Heart right ventricle (tissue), 16 donors: ENCODE measurements at regions of chr7 and their contacts with region 1.

Region 1: DNA sequence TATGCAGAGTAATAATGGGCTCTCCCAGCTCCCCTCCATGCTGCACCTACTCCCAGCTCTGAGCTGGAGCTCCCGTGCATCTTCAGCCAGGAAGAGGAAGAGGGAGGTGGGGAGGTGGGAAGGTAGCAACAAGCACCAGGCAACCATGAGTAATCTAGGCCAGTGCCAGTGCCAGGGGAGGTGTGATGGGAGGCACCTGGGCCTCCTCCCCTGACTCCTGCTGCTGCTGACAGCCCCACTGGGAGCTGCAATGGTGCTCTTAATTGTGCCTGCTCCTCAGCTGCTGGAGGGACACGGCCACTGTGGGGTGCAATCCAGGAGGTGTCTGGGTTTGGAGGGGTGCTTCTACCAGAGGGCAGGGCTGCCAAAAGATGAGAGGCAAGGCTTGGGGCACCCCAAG is 243.0 kb downstream of the PLXNA4 start:
- DNase-seq: no peak
- ATAC-seq: peak in 7 of 8 donors; percentile 13 to 73 (median 34)
- H3K4me3 ChIP-seq: no peak overlapping the region
- H3K27ac ChIP-seq: no peak overlapping the region
- H3K4me1 ChIP-seq: peaks cover 0 to 23% (median 8%) of the 10 kb centered on the region in 9 donors
- H3K27me3 ChIP-seq: peaks cover 0 to 3% (median 0%) of the 10 kb centered on the region in 7 donors
- CTCF ChIP-seq: no peak

Region 2: DNA sequence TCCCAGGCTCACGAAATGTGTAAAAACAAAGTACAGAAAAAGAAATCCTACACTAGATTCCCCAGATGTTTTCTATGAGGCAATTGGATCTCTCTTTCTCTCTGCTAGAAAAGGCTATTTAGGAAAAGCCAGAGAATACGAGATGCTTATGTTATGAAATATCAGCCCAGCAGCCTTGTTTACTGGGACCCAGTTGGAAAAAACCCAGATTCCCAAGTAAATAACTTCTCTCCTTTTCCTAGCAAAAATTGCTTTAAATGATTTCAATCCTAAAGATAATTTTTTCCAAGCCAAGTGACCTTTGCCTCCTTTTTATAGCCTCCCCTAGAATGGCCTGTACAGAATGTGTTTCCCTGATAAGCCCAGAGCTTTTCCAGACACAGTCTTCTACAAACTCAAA is 43.7 kb after region 1 on chr7:
- intact Hi-C with region 1: loop called in 2 of 10 experiments (anchors 5 kb)
- DNase-seq: no peak
- ATAC-seq: peak in 2 of 8 donors; percentile 45 to 50
- H3K4me3 ChIP-seq: no peak overlapping the region
- H3K27ac ChIP-seq: peak overlapping the region in 7 of 10 donors; percentile 36 to 55 (median 39)
- H3K4me1 ChIP-seq: peaks cover 10 to 62% (median 44%) of the 10 kb centered on the region in 9 donors
- H3K27me3 ChIP-seq: no peaks in the 10 kb centered on the region
- CTCF ChIP-seq: no peak

Region 3: DNA sequence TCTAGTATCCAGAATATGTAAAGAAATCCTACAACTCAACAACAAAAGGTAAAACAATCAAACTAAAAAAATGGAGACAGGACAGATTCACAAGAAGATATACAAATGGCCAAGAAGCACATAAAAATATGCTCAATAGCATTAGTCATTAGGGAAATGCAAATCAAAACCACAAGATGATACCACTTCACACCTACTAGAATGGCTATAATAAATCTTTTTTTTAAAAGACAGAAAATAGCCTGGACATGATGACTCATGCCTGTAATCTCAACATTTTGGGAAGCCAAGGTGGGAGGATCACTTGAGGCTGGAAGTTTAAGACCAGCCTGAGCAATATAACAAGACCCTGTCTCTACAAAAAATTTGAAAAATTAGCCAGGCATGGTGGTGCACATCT is 776.5 kb after region 1 on chr7:
- intact Hi-C with region 1: no loop called
- DNase-seq: no peak
- ATAC-seq: no peak
- H3K4me3 ChIP-seq: no peak overlapping the region
- H3K27ac ChIP-seq: no peak overlapping the region
- H3K4me1 ChIP-seq: no peaks in the 10 kb centered on the region
- H3K27me3 ChIP-seq: peaks cover 0 to 32% (median 12%) of the 10 kb centered on the region in 7 donors
- CTCF ChIP-seq: no peak

Region 4: GRCh38 chr7:133394369-133394768 is 1061.1 kb after region 1 on chr7:
- intact Hi-C with region 1: loop called in 1 of 10 experiments (anchors 10 kb)
- DNase-seq: no peak
- ATAC-seq: no peak
- H3K4me3 ChIP-seq: no peak overlapping the region
- H3K27ac ChIP-seq: no peak overlapping the region
- H3K4me1 ChIP-seq: peaks cover 0 to 14% (median 5%) of the 10 kb centered on the region in 9 donors
- H3K27me3 ChIP-seq: no peaks in the 10 kb centered on the region
- CTCF ChIP-seq: no peak